ENCODE measurements at regions of chr15 and their contacts with region 1.

Region 1: GRCh38 chr15:75625542-75626347 is at the start of gene SNUPN:
- DNase-seq: peak; percentile 95 to 97
- ATAC-seq: peak; percentile 94 to 95 (median 95)
- H3K4me3 ChIP-seq: peak within 1 kb of the TSS; percentile 81
- H3K27ac ChIP-seq: peak within 1 kb of the TSS; percentile 94
- H3K4me1 ChIP-seq: peaks cover 8% of the 10 kb centered on the region
- H3K27me3 ChIP-seq: no peaks in the 10 kb centered on the region
- CTCF ChIP-seq: no peak
- total RNA-seq, gene SNUPN: 17.1 to 21.9 (median 19.0) TPM

Region 2: DNA sequence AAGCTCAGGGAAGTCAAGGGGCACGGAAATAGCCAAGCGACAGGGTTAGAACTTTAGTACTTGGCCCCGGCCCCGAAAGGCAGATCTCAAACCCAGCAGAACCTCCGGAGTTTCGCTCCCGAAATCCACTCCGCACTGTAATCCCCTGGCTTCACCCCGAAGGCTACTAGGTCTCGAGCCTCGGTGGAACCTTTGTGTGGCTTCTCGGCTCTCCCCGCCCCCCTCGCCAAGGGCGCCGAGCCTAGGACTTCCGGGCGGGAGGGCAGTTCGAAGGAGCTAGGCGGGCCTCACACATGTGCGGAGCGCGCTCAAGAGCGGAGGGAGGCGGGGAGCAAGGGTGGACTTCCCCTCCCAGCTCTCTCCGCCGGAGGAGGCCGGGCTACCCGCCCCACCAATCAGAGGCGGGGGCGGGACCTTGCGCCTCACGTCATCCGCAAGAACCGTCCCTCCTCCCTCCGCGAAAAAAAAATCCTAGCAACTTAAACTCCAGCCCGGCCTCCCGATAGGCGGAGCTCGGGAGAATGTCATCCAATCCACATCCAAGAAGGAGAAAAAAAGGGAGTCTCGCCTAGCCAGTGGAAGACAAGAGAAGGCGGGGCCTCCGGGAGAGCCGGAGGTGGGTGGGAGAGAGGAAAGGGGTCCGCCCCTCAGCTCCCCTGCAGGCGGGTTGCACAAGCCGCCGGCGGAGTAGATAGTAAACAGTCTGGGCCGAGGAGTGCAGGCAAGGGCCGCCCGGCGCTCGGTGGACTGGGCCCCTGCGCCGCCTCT is 171.9 kb before region 1 on chr15:
- intact Hi-C with region 1: loop called in 1 of 2 experiments (anchors 5 kb)
- DNase-seq: peak; percentile 98 to 99
- ATAC-seq: peak; percentile 65 to 74 (median 70)
- H3K4me3 ChIP-seq: peak overlapping the region; percentile 96
- H3K27ac ChIP-seq: peak overlapping the region; percentile 99
- H3K4me1 ChIP-seq: peaks cover 15% of the 10 kb centered on the region
- H3K27me3 ChIP-seq: no peaks in the 10 kb centered on the region
- CTCF ChIP-seq: no peak

Region 3: GRCh38 chr15:75589071-75589470 is 36.7 kb before region 1 on chr15:
- intact Hi-C with region 1: loop called in 1 of 2 experiments (anchors 5 kb)
- DNase-seq: no peak
- ATAC-seq: no peak
- H3K4me3 ChIP-seq: no peak overlapping the region
- H3K27ac ChIP-seq: no peak overlapping the region
- H3K4me1 ChIP-seq: peaks cover 8% of the 10 kb centered on the region
- H3K27me3 ChIP-seq: no peaks in the 10 kb centered on the region
- CTCF ChIP-seq: no peak

Region 4: DNA sequence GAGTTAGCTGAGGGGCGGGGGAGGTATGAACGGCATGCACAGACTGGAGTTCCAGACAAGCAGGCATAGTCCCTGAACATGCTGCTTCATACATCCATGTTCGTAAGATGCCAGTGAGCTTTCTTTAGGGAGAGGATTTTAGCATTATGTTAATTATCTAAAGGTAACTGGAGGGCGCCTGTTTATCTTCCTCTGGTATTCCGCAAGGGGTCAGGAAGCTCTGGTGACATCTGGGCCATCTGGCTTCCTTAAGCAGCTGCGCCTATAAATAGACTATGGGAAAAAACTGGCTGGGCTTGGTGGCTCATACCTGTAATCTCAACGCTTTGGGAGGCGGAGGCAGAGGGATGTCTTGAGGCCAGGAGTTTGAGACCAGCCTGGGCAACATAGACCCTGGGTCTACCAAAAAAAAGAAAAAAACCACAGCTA is 276.4 kb after region 1 on chr15:
- intact Hi-C with region 1: no loop called
- DNase-seq: no peak
- ATAC-seq: peak in 3 of 4 donors; percentile 38 to 67 (median 65)
- H3K4me3 ChIP-seq: no peak overlapping the region
- H3K27ac ChIP-seq: peak overlapping the region; percentile 78
- H3K4me1 ChIP-seq: peaks cover 13% of the 10 kb centered on the region
- H3K27me3 ChIP-seq: no peaks in the 10 kb centered on the region
- CTCF ChIP-seq: no peak

Measured in psoas muscle (tissue), 8 donors.